ENCODE measurements at regions of chr7 and their contacts with region 1.

Region 1: DNA sequence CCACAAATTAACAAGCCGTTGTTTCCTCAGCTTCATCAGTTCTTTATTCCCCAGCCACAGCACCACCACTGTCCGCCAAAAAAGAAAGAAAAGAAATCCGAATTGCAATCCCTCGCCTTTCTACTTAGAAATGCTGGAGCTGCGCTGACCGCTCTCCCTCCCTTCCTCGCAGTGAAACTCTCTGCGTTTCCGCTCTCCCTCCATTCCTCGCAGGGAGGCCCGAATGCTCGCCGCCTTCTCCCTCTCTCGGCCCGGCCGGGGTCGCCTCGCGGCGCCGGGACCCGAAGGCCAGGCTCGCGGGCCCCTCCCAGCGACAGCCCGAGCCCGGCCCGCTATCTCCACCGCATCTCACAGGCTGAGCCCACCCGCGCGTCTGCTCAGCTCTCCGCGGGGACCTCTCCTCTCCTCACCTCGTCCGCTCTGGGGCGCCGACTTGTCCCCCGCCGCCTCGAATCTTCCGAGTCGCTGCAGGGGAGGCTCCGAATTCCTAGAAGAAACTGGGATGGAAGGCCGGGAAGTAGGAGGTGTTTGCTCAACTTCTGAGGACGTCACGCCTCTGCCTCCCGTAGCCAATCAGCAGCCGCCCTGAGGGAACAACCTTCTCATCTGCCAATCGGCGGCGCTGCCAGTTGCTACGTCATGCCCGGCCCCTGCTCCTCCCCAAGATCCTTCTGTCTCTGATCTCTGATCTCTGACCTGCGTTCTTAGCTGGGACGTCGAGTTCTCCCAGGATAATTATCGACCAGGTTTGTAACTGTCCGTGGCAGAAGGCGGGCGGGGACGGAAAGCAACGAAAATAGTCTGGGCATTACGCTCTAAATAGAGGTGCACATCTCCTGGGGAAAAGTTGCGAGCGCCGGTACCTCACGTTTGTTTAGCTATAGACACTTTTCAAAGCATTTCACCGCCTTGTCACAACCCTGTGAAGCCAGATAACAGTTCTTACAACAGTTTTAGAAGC is at the start of gene AASS:
- DNase-seq: peak; percentile 96
- H3K4me3 ChIP-seq: peak within 1 kb of the TSS; percentile 68 to 92 (median 81)
- H3K27ac ChIP-seq: peak within 1 kb of the TSS; percentile 58
- H3K4me1 ChIP-seq: peaks cover 16% of the 10 kb centered on the region
- H3K27me3 ChIP-seq: no peaks in the 10 kb centered on the region
- CTCF ChIP-seq: no peak
- POLR2A ChIP-seq: peak; percentile 71
- total RNA-seq, gene AASS: 27.8 and 30.1 TPM in 2 replicates

Region 2: DNA sequence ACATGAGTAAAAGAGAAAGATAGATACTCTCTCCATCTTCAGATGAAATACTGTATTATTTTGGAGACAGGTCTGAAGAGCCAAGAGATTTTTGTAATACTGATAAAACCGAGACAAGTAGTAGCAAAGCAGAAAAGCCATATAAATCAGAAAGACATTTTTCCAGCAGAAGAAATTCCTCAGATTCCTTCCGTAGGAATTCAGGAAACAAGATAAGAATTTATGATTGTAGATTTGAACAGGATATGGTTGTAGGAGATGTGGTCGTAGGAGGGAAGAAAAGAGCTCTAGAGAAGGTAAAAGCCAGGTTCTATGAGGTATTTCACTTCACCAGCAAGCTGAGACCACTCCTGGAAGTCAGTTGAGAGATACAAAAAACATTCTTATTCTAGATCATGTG is 17.6 kb after region 1 on chr7:
- CTCF ChIA-PET with region 1: interaction called, 3 read pairs
- POLR2A ChIA-PET with region 1: interaction called, 7 read pairs
- dilution Hi-C with region 1: no loop called
- intact Hi-C with region 1: loop called (anchors 1 kb)
- DNase-seq: no peak
- H3K4me3 ChIP-seq: no peak overlapping the region
- H3K27ac ChIP-seq: no peak overlapping the region
- H3K4me1 ChIP-seq: peaks cover 7% of the 10 kb centered on the region
- H3K27me3 ChIP-seq: no peaks in the 10 kb centered on the region
- CTCF ChIP-seq: no peak
- POLR2A ChIP-seq: no peak

Region 3: DNA sequence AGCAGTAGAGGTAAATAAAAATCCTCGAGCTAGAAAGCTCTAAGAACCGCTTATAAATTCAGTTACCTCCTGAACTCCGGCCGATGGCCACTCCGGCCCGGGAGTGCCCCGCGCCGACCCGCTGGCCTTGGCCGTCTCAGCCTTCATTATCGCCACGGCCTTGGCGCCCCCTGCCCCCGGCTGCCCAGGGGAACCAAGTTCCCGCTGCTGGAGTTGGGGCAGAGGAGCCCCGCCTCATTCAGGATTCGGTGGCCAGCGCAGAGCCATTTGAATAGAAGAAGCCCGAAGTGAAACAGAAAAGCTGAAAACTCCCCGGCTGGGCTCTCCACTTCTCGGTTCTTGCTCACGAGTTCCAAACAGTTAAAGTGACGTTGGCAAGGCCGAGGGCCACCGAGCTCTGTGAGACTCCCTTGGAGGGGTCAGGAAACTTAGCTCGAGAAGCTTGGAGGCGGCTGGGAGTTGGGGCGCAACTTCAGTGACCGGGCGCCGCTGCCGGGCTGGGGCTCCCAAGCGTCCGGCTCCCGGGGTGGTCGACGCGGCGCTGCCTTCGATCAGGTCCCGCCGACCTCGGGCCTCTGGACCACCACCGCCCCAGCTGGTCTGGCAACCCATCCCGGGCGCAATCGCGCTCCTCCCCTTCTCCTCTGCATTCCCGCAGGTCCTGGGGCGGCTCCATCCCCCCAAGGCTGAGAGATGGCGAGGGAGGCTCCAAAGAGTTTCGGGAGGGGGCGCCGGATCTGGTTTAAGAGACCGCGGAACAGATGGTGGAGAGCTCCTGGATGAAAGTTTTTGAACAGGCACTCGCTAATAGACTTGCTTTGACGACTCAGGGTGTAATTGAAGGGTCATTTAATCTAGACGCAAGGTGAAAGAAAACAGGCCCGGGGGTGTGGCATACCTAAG is 166.3 kb after region 1 on chr7:
- CTCF ChIA-PET with region 1: no interaction called
- POLR2A ChIA-PET with region 1: no interaction called
- dilution Hi-C with region 1: no loop called
- intact Hi-C with region 1: loop called (anchors 5 kb)
- DNase-seq: peak; percentile 38
- H3K4me3 ChIP-seq: peak overlapping the region; percentile 13 to 33 (median 23)
- H3K27ac ChIP-seq: no peak overlapping the region
- H3K4me1 ChIP-seq: peaks cover 14% of the 10 kb centered on the region
- H3K27me3 ChIP-seq: peaks cover 85 to 100% of the 10 kb centered on the region in 2 experiments
- CTCF ChIP-seq: no peak
- POLR2A ChIP-seq: no peak

Measured in endothelial cell of umbilical vein (primary cell).